GM18951 (cell line): ENCODE measurements at regions of chr3 and their contacts with region 1.

Region 1: GRCh38 chr3:118884748-118885206 is 149.9 kb downstream of the IGSF11 start:
- POLR2A ChIP-seq: no peak

Region 2: DNA sequence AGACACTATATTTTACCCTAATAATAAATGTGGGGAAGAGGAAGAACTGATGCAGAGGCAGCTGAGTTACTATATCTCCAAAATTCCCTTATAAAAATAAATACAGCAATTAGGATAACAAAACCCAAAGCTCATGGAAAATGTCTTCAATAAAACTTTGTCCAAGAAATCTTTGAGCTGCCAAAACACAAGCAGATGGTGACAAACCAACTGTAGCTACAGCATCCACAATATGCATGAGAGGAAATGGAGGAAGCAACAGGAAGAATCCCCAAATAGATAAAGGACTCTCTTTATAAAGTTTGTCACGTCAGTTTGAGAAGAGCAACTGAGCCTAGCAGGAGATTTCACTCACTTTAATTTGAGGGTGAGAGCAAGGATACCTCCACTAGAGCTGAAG is 488.3 kb before region 1 on chr3:
- in situ Hi-C with region 1: no loop called
- POLR2A ChIP-seq: no peak

Region 3: DNA sequence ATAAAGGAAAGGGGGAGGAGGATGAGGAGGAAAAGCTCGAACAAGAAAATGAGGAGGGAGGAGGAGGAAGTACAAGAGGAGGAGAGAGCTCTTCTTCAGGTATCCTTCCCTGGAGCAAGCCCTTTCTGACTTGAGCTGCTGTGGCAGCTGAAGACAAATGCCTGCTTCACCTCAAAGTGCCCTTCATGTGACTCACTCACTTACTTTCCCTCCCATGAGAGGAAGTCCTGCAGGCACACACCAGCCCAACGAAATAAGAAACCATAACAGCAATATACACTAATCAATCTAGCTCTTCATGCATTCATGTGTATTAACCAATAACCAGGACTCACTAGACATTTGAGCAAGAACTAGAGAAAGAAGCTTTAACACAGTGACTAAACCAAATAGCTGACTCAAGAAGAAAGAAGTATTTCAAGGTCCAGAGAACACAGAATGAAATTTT is 102.0 kb before region 1 on chr3:
- in situ Hi-C with region 1: no loop called
- POLR2A ChIP-seq: no peak

Region 4: GRCh38 chr3:119098619-119099222 is 213.9 kb after region 1 on chr3:
- in situ Hi-C with region 1: loop called (anchors 25 kb)
- POLR2A ChIP-seq: no peak